ENCODE measurements at regions of chr10 and their contacts with region 1.

Region 1: DNA sequence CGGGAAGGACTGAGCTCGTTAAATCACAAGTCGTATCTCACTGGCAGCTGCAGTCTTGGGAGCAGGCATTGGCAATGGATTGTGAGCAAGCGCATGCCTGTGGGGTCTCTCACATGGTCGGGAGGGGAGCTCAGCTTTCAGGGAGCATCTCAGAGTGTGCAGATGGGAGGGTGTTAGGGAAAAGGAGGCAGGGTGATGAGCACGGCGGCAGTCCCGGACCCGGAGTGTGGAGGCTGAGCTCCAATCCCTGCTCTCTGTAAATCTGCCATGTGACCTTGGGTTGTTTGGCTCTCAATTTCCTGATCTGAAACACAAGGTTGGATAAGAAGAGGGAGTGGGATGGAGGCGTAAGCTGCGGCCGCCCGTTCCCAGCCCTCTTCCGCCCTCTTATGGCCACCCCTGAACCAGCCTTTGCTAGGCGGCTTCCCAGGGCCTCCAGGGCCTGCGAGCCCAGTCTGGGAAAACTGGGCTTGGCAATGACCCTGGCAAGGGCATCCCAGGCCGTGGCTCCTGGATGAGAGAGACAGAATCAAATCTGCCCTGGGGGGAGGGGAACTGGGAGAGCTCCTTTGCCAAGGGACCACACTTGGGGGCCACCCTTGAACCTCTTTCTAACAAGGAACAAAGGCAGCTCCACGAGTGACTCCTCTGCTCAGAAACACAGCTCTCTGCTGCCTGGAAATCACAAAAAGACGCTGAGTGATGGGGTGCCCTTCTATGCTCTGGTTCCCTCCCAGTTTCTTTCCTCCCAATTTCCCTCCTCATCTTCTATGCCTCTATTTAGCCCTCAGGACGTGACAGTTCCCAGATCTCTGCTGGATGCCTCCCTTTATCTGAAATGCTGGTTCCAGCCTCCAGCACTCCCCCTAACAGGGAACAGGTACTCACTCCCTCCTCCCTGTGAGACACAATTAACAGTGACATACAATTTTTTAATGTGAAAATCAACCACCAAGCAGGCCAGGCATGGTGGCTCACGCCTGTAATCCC is 41.7 kb upstream of the LOXL4 start:
- DNase-seq: peak; percentile 81
- ATAC-seq: peak; percentile 99

Region 2: GRCh38 chr10:98170249-98171117 is 139.2 kb before region 1 on chr10:
- intact Hi-C with region 1: loop called (anchors 5 kb)
- DNase-seq: no peak
- ATAC-seq: peak; percentile 62

Region 3: DNA sequence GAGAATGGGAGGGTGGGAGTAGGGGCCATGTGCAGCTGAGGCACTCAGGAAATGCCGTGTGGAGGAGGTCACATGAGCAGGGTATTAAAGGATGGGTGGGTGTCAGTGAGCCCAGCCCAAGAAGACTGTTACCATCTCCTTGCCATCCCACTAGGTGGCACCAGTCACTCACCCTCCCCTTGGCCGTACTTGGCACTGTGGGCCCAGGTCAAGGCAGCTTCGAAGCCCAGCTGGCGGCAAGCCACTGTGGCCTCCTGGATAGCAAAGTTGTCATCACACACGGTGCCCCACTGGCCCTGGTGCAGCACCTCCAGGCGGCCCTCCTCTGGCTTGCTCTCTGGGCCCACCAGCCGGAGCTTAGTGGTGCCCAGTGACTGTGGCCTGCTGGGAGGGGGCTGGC is 47.1 kb before region 1 on chr10:
- intact Hi-C with region 1: loop called (anchors 10 kb)
- DNase-seq: peak; percentile 83
- ATAC-seq: peak; percentile 87

Region 4: GRCh38 chr10:98391578-98391991 is 81.9 kb after region 1 on chr10:
- intact Hi-C with region 1: no loop called
- DNase-seq: peak; percentile 79
- ATAC-seq: peak; percentile 69

Measured in left ventricle myocardium superior (tissue), 1 donor.